Vagina (tissue), 2 donors: ENCODE measurements at regions of chr9 and their contacts with region 1.

Region 1: DNA sequence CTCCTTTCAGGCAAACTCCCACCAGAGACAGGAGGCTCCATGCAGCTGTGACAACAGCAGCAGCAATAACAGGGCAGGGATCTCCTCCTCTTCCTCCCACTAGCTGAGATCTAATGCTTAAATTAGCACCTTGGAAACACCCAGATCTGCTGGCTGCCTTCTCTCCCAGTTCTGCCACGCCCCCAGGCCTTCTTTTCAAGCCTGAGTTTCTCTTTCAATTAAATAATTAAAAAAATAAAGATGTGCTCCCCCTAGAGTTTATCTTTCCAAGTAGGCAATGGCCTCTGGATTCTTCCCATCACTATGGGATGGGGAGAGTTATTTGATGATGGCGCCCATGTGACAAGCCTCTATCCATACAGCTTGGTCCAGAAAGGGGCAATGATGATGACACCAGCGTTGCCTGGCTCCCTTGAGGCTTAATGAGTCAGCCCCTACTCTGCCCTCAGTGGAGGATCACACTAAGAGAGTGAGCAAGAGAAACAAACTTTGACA is 3.8 kb downstream of the FAM219A start:
- DNase-seq: no peak
- H3K4me3 ChIP-seq: no peak overlapping the region
- H3K27ac ChIP-seq: no peak overlapping the region
- H3K4me1 ChIP-seq: peaks cover 44% of the 10 kb centered on the region
- H3K27me3 ChIP-seq: no peaks in the 10 kb centered on the region
- CTCF ChIP-seq: no peak
- POLR2A ChIP-seq: no peak

Region 2: DNA sequence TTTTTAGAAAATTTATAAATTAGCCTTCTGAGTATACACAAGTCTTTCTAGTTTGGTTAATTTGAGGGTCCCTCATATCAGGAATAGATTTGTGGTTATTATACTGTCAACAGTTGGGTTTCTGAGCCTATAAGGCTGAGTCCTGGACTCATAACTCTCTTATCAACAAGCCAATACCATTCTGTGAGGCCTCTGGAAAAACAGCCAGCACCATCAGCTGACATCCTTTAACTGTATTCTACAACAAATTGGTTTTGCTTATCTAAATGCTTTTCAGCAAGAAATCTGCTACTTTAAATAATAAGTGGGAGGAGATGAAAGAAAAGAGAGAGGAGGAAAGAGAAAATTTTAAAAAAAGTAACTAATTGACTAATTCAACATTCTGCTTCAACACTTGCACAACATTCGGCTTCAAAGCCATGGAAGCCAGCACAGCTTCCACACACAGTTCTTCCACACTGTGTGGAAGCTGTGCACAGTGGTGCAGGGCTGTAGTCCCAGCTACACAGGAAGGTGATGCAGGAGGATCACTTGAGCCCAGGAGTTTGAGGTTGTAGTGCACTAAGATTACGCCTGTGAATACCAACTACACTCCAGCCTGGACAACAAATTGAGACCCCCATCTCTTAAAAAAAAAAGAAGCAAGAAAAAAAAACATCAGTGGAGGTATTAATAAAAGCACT is 490.4 kb before region 1 on chr9:
- intact Hi-C with region 1: no loop called
- DNase-seq: no peak
- H3K4me3 ChIP-seq: no peak overlapping the region
- H3K27ac ChIP-seq: no peak overlapping the region
- H3K4me1 ChIP-seq: no peaks in the 10 kb centered on the region
- H3K27me3 ChIP-seq: no peaks in the 10 kb centered on the region
- CTCF ChIP-seq: no peak
- POLR2A ChIP-seq: no peak

Region 3: GRCh38 chr9:34500623-34501267 is 46.1 kb after region 1 on chr9:
- intact Hi-C with region 1: loop called (anchors 5 kb)
- DNase-seq: no peak
- H3K4me3 ChIP-seq: no peak overlapping the region
- H3K27ac ChIP-seq: no peak overlapping the region
- H3K4me1 ChIP-seq: peaks cover 25% of the 10 kb centered on the region
- H3K27me3 ChIP-seq: no peaks in the 10 kb centered on the region
- CTCF ChIP-seq: peak; percentile 82 to 90 (median 84)
- POLR2A ChIP-seq: no peak